Activated CD4-positive, alpha-beta memory T cell treated with anti-CD3 and anti-CD28 coated beads for 36 hours (primary cell): ENCODE measurements at regions of chr14 and their contacts with region 1.

Region 1: GRCh38 chr14:31207755-31208545 is at the start of gene HECTD1:
- DNase-seq: peak; percentile 91
- H3K4me3 Mint-ChIP-seq: peak within 1 kb of the TSS; percentile 94
- H3K27ac Mint-ChIP-seq: peak within 1 kb of the TSS; percentile 100
- H3K4me1 Mint-ChIP-seq: peaks cover 48% of the 10 kb centered on the region
- H3K27me3 Mint-ChIP-seq: no peaks in the 10 kb centered on the region
- total RNA-seq, gene HECTD1: 84.9 to 88.1 TPM

Region 2: DNA sequence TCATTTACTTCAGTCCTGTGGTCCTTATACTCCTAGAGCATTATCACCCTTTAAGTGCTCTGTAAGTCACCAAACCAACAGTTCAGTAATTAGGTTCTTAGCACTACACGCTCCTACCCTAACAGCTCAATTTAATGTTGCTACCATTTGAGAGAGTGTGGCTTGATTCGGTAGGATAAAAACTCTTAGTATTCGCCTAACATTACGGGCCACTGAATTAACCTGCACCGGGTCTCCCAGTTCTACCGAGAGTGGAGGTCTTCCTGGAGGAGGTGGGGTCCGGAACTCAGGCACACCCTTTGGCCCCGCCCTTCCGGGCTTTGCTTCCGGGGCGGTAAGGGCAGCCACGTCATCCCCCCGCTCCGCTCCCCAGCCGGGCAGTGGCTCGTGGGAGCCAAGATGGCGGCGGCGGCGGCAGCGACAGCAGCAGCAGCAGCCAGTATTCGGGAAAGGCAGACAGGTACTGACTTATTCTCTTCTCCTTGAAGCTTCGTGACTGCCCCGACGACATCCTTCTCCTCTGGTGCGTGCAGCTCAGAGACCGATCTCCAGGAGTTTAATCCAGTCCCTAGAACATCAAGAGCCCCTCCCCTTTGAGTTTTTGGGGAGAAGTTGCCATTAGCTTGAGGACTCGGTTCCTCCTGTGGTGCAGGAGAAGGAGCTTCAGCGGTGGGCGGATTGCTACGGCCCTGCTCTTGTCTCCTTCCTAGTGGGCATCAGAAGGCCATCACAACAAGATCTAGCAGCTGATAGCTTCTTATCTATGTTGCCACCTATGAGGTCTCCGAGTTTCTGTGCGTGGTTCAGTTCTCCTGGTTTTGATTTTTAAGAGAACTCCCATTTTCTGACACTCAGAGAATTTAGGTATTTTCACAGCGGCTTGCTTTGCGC is 585.8 kb before region 1 on chr14 and contains the start of gene SCFD1:
- CTCF ChIA-PET with region 1: interaction called, 3 read pairs
- POLR2A ChIA-PET with region 1: interaction called, 4 read pairs
- intact Hi-C with region 1: loop called (anchors 2 kb)
- DNase-seq: peak; percentile 96
- H3K4me3 Mint-ChIP-seq: peak within 1 kb of the TSS; percentile 83
- H3K27ac Mint-ChIP-seq: peak within 1 kb of the TSS; percentile 85
- H3K4me1 Mint-ChIP-seq: peaks cover 36% of the 10 kb centered on the region
- H3K27me3 Mint-ChIP-seq: no peaks in the 10 kb centered on the region
- total RNA-seq, gene SCFD1: 52.6 to 56.5 TPM

Region 3: DNA sequence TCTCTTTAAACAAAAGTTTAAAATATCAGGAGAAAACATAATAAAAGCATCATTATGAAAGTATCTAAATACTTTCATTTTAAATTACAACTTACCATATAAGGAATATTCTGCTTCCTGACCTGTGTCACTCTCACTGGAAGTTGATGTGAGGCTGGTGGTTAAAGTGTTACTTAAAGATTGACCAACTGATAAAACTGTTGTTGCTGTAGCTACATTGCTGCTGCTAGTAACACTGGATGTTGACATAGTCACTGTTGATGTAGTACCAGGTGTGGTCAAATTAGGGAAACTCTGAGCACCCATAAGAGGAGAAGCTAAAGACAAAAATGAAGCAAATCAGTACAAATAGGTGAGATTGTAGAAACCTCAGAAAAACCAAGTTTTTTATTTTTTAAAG is 80.3 kb before region 1 on chr14:
- CTCF ChIA-PET with region 1: interaction called, 6 read pairs
- POLR2A ChIA-PET with region 1: interaction called, 5 read pairs
- intact Hi-C with region 1: loop called (anchors 1 kb)
- DNase-seq: peak; percentile 14
- H3K4me3 Mint-ChIP-seq: no peak overlapping the region
- H3K27ac Mint-ChIP-seq: peak overlapping the region; percentile 55
- H3K4me1 Mint-ChIP-seq: peaks cover 33% of the 10 kb centered on the region
- H3K27me3 Mint-ChIP-seq: no peaks in the 10 kb centered on the region

Region 4: DNA sequence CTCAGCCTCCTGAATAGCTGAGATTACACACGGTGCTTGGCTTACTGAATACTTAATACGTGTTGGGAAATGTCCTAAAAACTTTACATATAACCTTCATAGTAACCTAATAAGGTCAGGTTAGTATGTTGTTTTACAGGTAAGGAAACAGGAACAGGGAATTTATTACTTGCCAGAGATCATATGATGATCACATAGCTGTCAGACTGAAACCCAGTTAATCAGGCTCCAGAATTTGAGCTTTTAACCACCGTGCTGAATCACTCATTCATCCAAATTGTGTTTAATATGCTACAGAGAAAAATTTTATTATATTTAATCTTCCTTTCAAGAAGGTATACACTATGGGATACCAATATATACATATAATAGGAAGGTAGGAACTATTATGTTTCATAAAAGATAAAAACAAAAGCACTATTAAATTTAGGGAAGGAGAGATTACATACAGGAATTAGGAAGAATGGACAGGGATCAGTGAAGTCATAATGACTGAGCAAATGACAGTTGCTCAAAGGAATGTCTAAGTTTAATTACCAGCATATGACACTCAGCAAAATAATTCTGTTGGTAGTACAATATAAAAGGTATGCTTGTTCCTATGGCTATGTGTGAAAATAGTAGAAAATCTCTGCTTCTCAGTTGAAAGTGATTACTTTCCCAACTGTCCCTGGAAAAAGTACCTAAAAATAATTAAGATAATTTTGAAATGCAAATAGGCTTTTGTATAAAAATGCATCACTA is 153.1 kb after region 1 on chr14:
- CTCF ChIA-PET with region 1: interaction called, 12 read pairs
- POLR2A ChIA-PET with region 1: no interaction called
- intact Hi-C with region 1: loop called (anchors 5 kb)
- DNase-seq: no peak
- H3K4me3 Mint-ChIP-seq: no peak overlapping the region
- H3K27ac Mint-ChIP-seq: no peak overlapping the region
- H3K4me1 Mint-ChIP-seq: no peaks in the 10 kb centered on the region
- H3K27me3 Mint-ChIP-seq: no peaks in the 10 kb centered on the region

Region 5: DNA sequence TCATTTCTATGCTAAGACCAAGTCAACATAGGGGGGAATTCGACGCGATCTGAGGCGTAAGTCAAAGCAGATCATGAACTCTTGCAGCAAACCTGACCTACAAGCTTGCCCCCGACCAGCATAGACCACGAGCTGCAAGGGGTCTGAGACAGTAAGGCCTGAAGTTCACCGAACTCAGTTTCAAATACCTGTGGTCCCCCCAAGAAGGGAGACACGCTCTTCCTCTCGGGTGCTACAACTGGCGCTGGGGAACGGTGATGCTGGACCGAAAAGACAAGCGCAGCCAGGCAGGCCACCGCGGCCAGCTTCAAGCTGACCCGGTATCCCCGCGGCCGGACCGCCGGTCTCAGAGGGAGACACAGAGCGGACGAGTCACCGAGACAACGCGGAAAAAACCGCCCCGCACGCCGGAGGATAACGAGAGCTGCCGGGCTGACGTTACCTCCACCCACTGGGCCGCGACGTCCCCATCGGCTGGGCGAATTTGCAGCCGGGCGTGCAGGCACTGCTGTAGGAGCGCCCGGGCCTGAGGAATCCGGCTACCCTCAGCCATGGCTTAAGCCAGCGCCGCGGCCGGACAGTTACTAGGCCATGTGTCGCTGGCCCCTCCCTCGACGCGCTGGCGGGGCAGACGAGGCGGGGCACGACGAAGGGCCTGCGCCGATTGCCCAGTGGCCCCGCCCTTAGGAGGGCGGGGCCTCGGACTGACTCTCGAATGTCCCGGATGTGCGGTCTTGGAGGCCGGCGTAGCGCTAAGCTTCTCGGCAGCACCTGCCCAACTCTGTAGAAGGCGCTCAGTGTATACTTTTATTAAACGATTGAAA is 249.1 kb after region 1 on chr14 and contains the start of gene DTD2:
- CTCF ChIA-PET with region 1: interaction called, 6 read pairs
- POLR2A ChIA-PET with region 1: interaction called, 6 read pairs
- intact Hi-C with region 1: loop called (anchors 1 kb)
- DNase-seq: peak; percentile 94
- H3K4me3 Mint-ChIP-seq: peak within 1 kb of the TSS; percentile 95
- H3K27ac Mint-ChIP-seq: peak within 1 kb of the TSS; percentile 79
- H3K4me1 Mint-ChIP-seq: peaks cover 25% of the 10 kb centered on the region
- H3K27me3 Mint-ChIP-seq: no peaks in the 10 kb centered on the region
- total RNA-seq, gene DTD2: 19.1 to 20.2 TPM

Region 6: GRCh38 chr14:32202998-32203882 is 995.3 kb after region 1 on chr14 and contains the start of gene RNU6-8:
- CTCF ChIA-PET with region 1: no interaction called
- POLR2A ChIA-PET with region 1: no interaction called
- intact Hi-C with region 1: loop called (anchors 2 kb)
- DNase-seq: peak; percentile 89
- H3K4me3 Mint-ChIP-seq: peak within 1 kb of the TSS; percentile 89
- H3K27ac Mint-ChIP-seq: peak within 1 kb of the TSS; percentile 98
- H3K4me1 Mint-ChIP-seq: peaks cover 46% of the 10 kb centered on the region
- H3K27me3 Mint-ChIP-seq: peaks cover 2% of the 10 kb centered on the region
- total RNA-seq, gene RNU6-8: not detected